CD4-positive, alpha-beta memory T cell (primary cell): ENCODE measurements at regions of chr9 and their contacts with region 1.

Region 1: DNA sequence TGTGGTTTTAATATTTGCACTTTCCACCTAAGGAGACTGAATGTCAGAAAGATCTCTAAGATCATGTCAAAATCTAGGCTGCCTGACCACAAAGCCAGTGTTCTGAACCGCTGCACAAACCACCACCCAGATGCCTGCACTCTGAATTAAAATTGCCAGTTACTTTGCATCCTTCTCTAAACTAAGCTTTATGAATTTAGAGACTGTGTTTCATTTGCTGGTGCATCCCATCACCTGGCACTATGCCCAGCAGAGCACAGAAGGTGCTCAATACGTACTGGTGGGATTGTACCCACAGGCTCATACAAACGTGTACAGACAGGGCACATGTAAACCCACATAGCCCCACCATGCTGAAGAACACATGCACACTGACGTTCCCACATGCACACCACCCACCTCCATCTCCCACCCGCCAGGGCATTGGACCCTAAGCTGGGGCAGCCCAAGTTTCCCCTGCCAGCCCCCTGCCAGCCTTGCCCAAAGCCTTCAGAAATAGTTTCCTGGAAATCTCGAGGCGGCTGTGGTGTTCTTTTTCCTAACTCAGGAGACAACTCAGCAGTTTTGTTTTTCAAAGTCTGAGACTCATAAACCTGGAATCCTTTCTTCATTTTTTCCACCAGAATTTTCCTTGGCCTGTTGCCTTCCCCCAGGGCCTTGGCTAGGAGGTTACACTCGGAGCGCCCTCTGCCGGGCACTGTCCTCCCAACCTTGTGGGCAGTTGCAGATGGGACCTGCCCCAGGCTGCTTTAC is 9.6 kb upstream of the TRAF1 start:
- DNase-seq: peak; percentile 78 to 85 (median 80)
- H3K4me3 ChIP-seq: peak overlapping the region in 1 of 2 donors; percentile 36
- H3K4me3 Mint-ChIP-seq: peak overlapping the region; percentile 24 to 76 (median 68)
- H3K27ac ChIP-seq: peak overlapping the region; percentile 66
- H3K27ac Mint-ChIP-seq: peak overlapping the region; percentile 89 to 97 (median 96)
- H3K4me1 ChIP-seq: peaks cover 61% of the 10 kb centered on the region
- H3K4me1 Mint-ChIP-seq: peaks cover 43 to 66% (median 54%) of the 10 kb centered on the region in 4 donors
- H3K27me3 ChIP-seq: no peaks in the 10 kb centered on the region
- H3K27me3 Mint-ChIP-seq: no peaks in the 10 kb centered on the region

Region 2: DNA sequence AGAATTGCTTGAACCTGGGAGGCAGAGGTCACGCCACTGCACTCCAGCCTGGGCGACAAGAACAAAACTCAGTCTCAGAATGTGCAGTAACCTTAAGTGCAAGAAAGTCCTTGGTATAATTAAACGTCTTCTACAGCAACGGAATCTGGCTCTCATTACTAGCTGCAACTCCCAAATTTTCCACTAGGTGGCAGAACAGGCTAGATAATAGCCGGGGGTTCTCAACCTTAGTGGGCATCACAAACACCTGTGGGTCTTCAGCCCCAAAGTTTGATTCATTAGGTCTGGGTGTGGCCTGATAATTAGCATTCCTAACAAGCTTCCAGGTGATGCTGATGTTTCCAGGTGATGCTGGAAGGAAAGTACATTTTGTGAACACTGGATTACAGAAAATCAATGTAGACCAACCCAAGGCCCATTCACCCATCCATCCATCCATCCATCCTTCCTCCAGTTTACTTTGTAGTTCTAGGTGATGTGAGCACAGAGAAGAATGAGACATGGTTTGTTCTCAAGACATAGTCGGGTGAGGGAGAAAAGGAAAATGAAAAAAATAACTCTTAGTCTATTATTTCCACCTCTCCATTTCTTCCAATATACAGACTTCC is 180.3 kb before region 1 on chr9:
- CTCF ChIA-PET with region 1: interaction called, 14 read pairs
- POLR2A ChIA-PET with region 1: no interaction called
- intact Hi-C with region 1: loop called (anchors 1 kb)
- DNase-seq: peak; percentile 58 to 75 (median 63)
- H3K4me3 ChIP-seq: no peak overlapping the region
- H3K4me3 Mint-ChIP-seq: no peak overlapping the region
- H3K27ac ChIP-seq: no peak overlapping the region
- H3K27ac Mint-ChIP-seq: peak overlapping the region in 6 of 7 donors; percentile 13 to 79 (median 49)
- H3K4me1 ChIP-seq: no peaks in the 10 kb centered on the region
- H3K4me1 Mint-ChIP-seq: peaks cover 0 to 6% (median 5%) of the 10 kb centered on the region in 4 donors
- H3K27me3 ChIP-seq: no peaks in the 10 kb centered on the region
- H3K27me3 Mint-ChIP-seq: no peaks in the 10 kb centered on the region

Region 3: GRCh38 chr9:120842690-120843499 is 93.3 kb before region 1 on chr9 and contains the start of gene PSMD5:
- CTCF ChIA-PET with region 1: interaction called, 15 read pairs
- POLR2A ChIA-PET with region 1: interaction called, 149 read pairs
- intact Hi-C with region 1: loop called (anchors 1 kb)
- DNase-seq: peak; percentile 93 to 99 (median 99)
- H3K4me3 ChIP-seq: peak within 1 kb of the TSS; percentile 78 to 84
- H3K4me3 Mint-ChIP-seq: peak within 1 kb of the TSS; percentile 92 to 98 (median 96)
- H3K27ac ChIP-seq: peak within 1 kb of the TSS; percentile 98
- H3K27ac Mint-ChIP-seq: peak within 1 kb of the TSS; percentile 96 to 98 (median 98)
- H3K4me1 ChIP-seq: peaks cover 75% of the 10 kb centered on the region
- H3K4me1 Mint-ChIP-seq: peaks cover 62 to 84% (median 73%) of the 10 kb centered on the region in 4 donors
- H3K27me3 ChIP-seq: no peaks in the 10 kb centered on the region
- H3K27me3 Mint-ChIP-seq: no peaks in the 10 kb centered on the region
- total RNA-seq, gene PSMD5: 46.4 to 59.0 TPM

Region 4: DNA sequence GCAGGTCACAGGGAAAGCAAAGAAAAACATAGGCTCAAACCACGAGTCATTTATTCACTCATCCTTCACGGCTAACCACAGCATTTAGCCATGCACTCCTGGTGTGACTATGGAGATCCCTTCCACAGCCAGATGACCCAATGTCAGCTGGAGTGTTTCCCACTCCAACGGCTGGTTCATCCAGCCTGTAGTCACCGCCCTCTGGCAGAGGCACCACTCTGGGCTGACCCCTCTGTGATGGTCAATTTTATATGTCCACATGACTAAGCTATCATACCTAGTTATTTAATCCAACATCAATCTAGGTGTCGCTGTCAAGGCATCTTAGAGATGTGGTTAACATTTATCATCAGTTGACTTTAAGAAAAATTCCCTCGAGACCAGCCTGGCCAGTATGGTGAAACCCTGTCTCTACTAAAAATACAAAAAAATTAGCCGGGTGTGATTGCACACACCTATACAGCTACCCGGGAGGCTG is 49.7 kb before region 1 on chr9:
- CTCF ChIA-PET with region 1: interaction called, 254 read pairs
- POLR2A ChIA-PET with region 1: interaction called, 5,577 read pairs
- intact Hi-C with region 1: loop called (anchors 1 kb)
- DNase-seq: no peak
- H3K4me3 ChIP-seq: no peak overlapping the region
- H3K4me3 Mint-ChIP-seq: peak overlapping the region in 1 of 8 donors; percentile 15
- H3K27ac ChIP-seq: no peak overlapping the region
- H3K27ac Mint-ChIP-seq: peak overlapping the region in 6 of 7 donors; percentile 1 to 89 (median 46)
- H3K4me1 ChIP-seq: peaks cover 67% of the 10 kb centered on the region
- H3K4me1 Mint-ChIP-seq: peaks cover 37 to 77% (median 58%) of the 10 kb centered on the region in 4 donors
- H3K27me3 ChIP-seq: no peaks in the 10 kb centered on the region
- H3K27me3 Mint-ChIP-seq: no peaks in the 10 kb centered on the region

Region 5: GRCh38 chr9:120904061-120904977 is 31.9 kb before region 1 on chr9:
- CTCF ChIA-PET with region 1: interaction called, 19 read pairs
- POLR2A ChIA-PET with region 1: interaction called, 5,577 read pairs
- intact Hi-C with region 1: loop called (anchors 1 kb)
- DNase-seq: peak; percentile 76 to 89 (median 80)
- H3K4me3 ChIP-seq: no peak overlapping the region
- H3K4me3 Mint-ChIP-seq: peak overlapping the region in 7 of 8 donors; percentile 55 to 75 (median 72)
- H3K27ac ChIP-seq: peak overlapping the region; percentile 79
- H3K27ac Mint-ChIP-seq: peak overlapping the region; percentile 93 to 99 (median 98)
- H3K4me1 ChIP-seq: peaks cover 91% of the 10 kb centered on the region
- H3K4me1 Mint-ChIP-seq: peaks cover 55 to 88% (median 71%) of the 10 kb centered on the region in 4 donors
- H3K27me3 ChIP-seq: no peaks in the 10 kb centered on the region
- H3K27me3 Mint-ChIP-seq: no peaks in the 10 kb centered on the region

Region 6: GRCh38 chr9:120916588-120916987 is 19.6 kb before region 1 on chr9:
- CTCF ChIA-PET with region 1: interaction called, 17 read pairs
- POLR2A ChIA-PET with region 1: interaction called, 5,577 read pairs
- intact Hi-C with region 1: no loop called
- DNase-seq: no peak
- H3K4me3 ChIP-seq: no peak overlapping the region
- H3K4me3 Mint-ChIP-seq: peak overlapping the region; percentile 2 to 84 (median 69)
- H3K27ac ChIP-seq: peak overlapping the region; percentile 50
- H3K27ac Mint-ChIP-seq: peak overlapping the region; percentile 78 to 96 (median 89)
- H3K4me1 ChIP-seq: peaks cover 92% of the 10 kb centered on the region
- H3K4me1 Mint-ChIP-seq: peaks cover 59 to 98% (median 79%) of the 10 kb centered on the region in 4 donors
- H3K27me3 ChIP-seq: no peaks in the 10 kb centered on the region
- H3K27me3 Mint-ChIP-seq: no peaks in the 10 kb centered on the region

Region 7: GRCh38 chr9:121107041-121107440 is 170.9 kb after region 1 on chr9:
- CTCF ChIA-PET with region 1: no interaction called
- POLR2A ChIA-PET with region 1: no interaction called
- intact Hi-C with region 1: no loop called
- DNase-seq: peak in 4 of 5 donors; percentile 37 to 48 (median 42)
- H3K4me3 ChIP-seq: no peak overlapping the region
- H3K4me3 Mint-ChIP-seq: no peak overlapping the region
- H3K27ac ChIP-seq: no peak overlapping the region
- H3K27ac Mint-ChIP-seq: peak overlapping the region in 6 of 7 donors; percentile 9 to 80 (median 44)
- H3K4me1 ChIP-seq: no peaks in the 10 kb centered on the region
- H3K4me1 Mint-ChIP-seq: peaks cover 20 to 37% (median 22%) of the 10 kb centered on the region in 4 donors
- H3K27me3 ChIP-seq: no peaks in the 10 kb centered on the region
- H3K27me3 Mint-ChIP-seq: no peaks in the 10 kb centered on the region

Region 8: DNA sequence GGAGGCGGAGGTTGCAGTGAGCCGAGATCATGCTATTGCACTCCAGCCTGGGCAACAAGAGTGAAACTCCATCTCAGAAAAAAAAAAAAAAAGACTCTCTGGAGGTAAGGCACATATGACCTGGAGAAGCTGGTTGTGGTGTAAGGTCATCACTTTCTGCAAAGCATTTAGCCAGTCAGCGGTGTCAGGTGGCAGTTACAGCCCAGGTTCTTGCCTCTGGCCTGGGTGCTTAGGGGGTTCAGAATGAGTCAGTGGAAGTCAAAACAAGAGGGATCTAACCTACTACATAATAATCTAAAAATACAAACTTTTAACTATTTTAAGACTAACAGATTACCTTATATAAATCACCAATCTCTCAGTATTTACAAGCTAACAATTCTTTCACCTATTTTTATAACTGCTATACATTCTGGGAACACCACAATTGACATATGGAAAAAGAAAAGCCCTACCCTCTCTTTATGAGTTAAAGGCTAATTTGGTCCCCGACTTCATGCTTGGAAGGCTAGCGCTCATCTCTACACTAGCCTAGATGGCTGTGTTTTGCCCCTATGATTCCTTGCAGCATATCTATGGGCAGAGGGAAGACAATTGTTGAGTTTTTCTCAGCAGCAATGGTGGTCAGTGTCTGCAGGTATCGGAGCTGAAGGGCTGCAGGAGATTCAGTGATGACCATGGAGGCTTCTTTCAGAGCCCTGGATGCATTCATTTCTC is 404.6 kb after region 1 on chr9:
- CTCF ChIA-PET with region 1: no interaction called
- POLR2A ChIA-PET with region 1: no interaction called
- intact Hi-C with region 1: no loop called
- DNase-seq: no peak
- H3K4me3 ChIP-seq: no peak overlapping the region
- H3K4me3 Mint-ChIP-seq: no peak overlapping the region
- H3K27ac ChIP-seq: no peak overlapping the region
- H3K27ac Mint-ChIP-seq: peak overlapping the region in 2 of 7 donors; percentile 39 to 66
- H3K4me1 ChIP-seq: no peaks in the 10 kb centered on the region
- H3K4me1 Mint-ChIP-seq: peaks cover 8 to 25% (median 18%) of the 10 kb centered on the region in 4 donors
- H3K27me3 ChIP-seq: no peaks in the 10 kb centered on the region
- H3K27me3 Mint-ChIP-seq: no peaks in the 10 kb centered on the region